ENCODE measurements at regions of chr16 and their contacts with region 1.

Region 1: DNA sequence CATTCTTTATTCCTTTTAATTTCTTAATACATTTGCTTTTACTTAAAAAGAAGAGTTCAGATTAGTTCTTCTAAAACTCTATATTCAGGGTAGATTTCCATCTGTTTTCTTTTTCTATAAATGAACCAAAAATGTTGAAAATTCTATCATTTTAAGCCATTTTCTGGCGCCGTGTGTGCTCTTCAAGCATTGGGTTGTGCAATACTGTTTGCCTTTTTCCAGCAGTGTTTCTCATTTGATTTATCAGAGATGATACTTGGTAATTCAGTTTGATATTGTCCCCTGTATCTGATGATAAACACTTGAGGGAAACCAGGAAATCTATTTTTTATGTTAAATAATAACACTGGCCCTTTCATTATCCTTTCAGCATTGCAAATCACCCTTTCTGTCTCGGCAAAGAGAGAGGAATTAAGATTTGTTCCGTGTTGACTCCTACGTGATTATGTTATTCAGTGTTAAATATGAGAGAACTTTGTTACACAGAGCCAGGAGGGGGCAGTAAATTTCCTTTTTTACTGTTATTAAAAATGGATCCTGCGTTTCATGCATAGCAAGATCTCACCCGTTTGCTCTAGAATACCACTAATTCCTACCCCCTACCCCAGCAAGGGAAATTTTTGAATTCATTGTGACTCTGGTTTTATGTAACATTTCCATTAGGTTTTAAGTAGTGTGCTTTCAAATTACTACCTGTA is 606.9 kb upstream of the RBFOX1 start:
- DNase-seq: no peak
- H3K4me3 ChIP-seq: no peak overlapping the region
- H3K27ac ChIP-seq: no peak overlapping the region
- H3K4me1 ChIP-seq: no peaks in the 10 kb centered on the region
- H3K27me3 ChIP-seq: no peaks in the 10 kb centered on the region
- CTCF ChIP-seq: no peak
- POLR2A ChIP-seq: no peak

Region 2: DNA sequence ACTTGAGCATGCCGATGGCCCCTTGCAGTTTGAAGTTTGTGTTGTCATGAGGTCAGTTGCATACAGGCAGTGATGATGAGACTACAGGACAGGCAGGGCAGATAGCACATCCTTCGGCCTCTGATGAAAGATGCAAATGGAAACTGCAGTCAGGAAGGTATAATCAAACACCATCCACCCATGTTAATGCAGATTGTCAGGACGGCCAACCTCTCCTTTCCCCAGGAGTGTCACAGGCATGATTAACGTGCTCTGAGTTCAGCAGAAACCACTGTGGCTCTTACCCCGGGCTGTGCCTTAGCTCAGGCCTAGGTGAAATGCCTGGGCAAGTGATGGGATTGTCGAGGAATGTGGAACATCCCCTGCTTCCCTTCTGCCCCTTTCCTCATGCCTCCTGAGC is 286.7 kb before region 1 on chr16:
- intact Hi-C with region 1: no loop called
- DNase-seq: no peak
- H3K4me3 ChIP-seq: no peak overlapping the region
- H3K27ac ChIP-seq: no peak overlapping the region
- H3K4me1 ChIP-seq: no peaks in the 10 kb centered on the region
- H3K27me3 ChIP-seq: no peaks in the 10 kb centered on the region
- CTCF ChIP-seq: no peak
- POLR2A ChIP-seq: no peak

Region 3: DNA sequence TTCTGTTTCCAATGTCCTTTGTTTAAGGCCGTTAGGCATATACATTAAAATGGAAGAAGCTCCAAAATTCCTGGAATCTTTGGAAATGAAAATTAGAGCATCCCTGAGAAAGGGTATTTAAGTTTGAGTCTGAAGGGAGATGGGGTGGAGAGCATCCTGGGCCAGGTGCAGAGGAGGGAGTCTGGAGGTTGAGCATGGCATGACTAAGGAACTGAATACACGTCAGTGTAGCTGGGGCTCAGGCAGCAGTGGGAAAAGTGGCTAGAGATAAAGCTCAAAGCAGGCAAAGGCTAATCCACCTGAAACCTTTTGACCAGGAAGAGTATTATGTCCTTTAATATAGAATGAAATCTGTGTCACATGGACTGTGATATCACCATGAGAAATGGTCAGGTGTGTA is 62.1 kb before region 1 on chr16:
- intact Hi-C with region 1: loop called (anchors 10 kb)
- DNase-seq: no peak
- H3K4me3 ChIP-seq: no peak overlapping the region
- H3K27ac ChIP-seq: no peak overlapping the region
- H3K4me1 ChIP-seq: no peaks in the 10 kb centered on the region
- H3K27me3 ChIP-seq: peaks cover 0 to 5% (median 0%) of the 10 kb centered on the region in 7 donors
- CTCF ChIP-seq: no peak
- POLR2A ChIP-seq: no peak

Region 4: GRCh38 chr16:6704306-6704930 is 21.4 kb before region 1 on chr16:
- intact Hi-C with region 1: no loop called
- DNase-seq: no peak
- H3K4me3 ChIP-seq: no peak overlapping the region
- H3K27ac ChIP-seq: no peak overlapping the region
- H3K4me1 ChIP-seq: no peaks in the 10 kb centered on the region
- H3K27me3 ChIP-seq: no peaks in the 10 kb centered on the region
- CTCF ChIP-seq: no peak
- POLR2A ChIP-seq: no peak

Region 5: DNA sequence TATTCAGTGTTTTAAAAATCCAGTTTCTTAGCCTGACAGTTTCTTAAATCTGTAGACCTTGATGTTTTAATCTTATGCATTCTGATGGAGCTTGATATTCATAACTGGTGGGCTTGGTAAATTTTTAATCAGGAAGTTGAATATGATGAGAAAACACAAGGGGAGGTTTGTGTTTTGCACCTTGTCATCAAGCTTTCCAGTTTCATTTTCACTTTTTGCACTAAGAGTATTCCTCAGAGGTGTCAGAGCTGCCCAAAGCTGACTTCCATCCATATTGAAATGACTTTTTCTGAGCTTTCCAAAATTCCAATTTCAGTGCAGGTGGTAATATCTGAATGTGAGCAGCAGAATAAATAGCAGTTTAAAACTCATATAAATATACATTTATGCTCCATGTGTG is 51.8 kb after region 1 on chr16:
- intact Hi-C with region 1: no loop called
- DNase-seq: no peak
- H3K4me3 ChIP-seq: no peak overlapping the region
- H3K27ac ChIP-seq: no peak overlapping the region
- H3K4me1 ChIP-seq: no peaks in the 10 kb centered on the region
- H3K27me3 ChIP-seq: no peaks in the 10 kb centered on the region
- CTCF ChIP-seq: no peak
- POLR2A ChIP-seq: no peak

Region 6: GRCh38 chr16:7113949-7114348 is 388.2 kb after region 1 on chr16:
- intact Hi-C with region 1: no loop called
- DNase-seq: no peak
- H3K4me3 ChIP-seq: no peak overlapping the region
- H3K27ac ChIP-seq: no peak overlapping the region
- H3K4me1 ChIP-seq: no peaks in the 10 kb centered on the region
- H3K27me3 ChIP-seq: no peaks in the 10 kb centered on the region
- CTCF ChIP-seq: no peak
- POLR2A ChIP-seq: no peak

Measured in spleen (tissue), 13 donors.